Activated CD4-positive, alpha-beta T cell treated with anti-CD3 and anti-CD28 coated beads for 36 hours (primary cell): ENCODE measurements at regions of chr20 and their contacts with region 1.

Region 1: GRCh38 chr20:2663887-2664719 is at the start of gene IDH3B:
- DNase-seq: peak; percentile 96
- ATAC-seq: peak; percentile 99
- H3K4me3 Mint-ChIP-seq: peak within 1 kb of the TSS; percentile 86
- H3K27ac Mint-ChIP-seq: peak within 1 kb of the TSS; percentile 97
- H3K4me1 Mint-ChIP-seq: peaks cover 22% of the 10 kb centered on the region
- H3K27me3 Mint-ChIP-seq: no peaks in the 10 kb centered on the region
- total RNA-seq, gene IDH3B: 92.4 to 115 TPM

Region 2: GRCh38 chr20:2206957-2207769 is 456.9 kb before region 1 on chr20:
- CTCF ChIA-PET with region 1: no interaction called
- POLR2A ChIA-PET with region 1: no interaction called
- intact Hi-C with region 1: loop called in 1 of 2 experiments (anchors 5 kb)
- DNase-seq: peak; percentile 85
- ATAC-seq: peak; percentile 77
- H3K4me3 Mint-ChIP-seq: peak overlapping the region; percentile 67
- H3K27ac Mint-ChIP-seq: peak overlapping the region; percentile 24
- H3K4me1 Mint-ChIP-seq: peaks cover 9% of the 10 kb centered on the region
- H3K27me3 Mint-ChIP-seq: no peaks in the 10 kb centered on the region

Region 3: GRCh38 chr20:2314759-2315439 is 349.2 kb before region 1 on chr20:
- CTCF ChIA-PET with region 1: no interaction called
- POLR2A ChIA-PET with region 1: no interaction called
- intact Hi-C with region 1: no loop called
- DNase-seq: no peak
- ATAC-seq: no peak
- H3K4me3 Mint-ChIP-seq: no peak overlapping the region
- H3K27ac Mint-ChIP-seq: no peak overlapping the region
- H3K4me1 Mint-ChIP-seq: no peaks in the 10 kb centered on the region
- H3K27me3 Mint-ChIP-seq: peaks cover 3% of the 10 kb centered on the region

Region 4: GRCh38 chr20:2508631-2509467 is 155.3 kb before region 1 on chr20 and contains the start of gene ZNF343:
- CTCF ChIA-PET with region 1: no interaction called
- POLR2A ChIA-PET with region 1: no interaction called
- intact Hi-C with region 1: loop called in 1 of 2 experiments (anchors 1 kb)
- DNase-seq: peak; percentile 88
- ATAC-seq: peak; percentile 95
- H3K4me3 Mint-ChIP-seq: peak within 1 kb of the TSS; percentile 85
- H3K27ac Mint-ChIP-seq: peak within 1 kb of the TSS; percentile 95
- H3K4me1 Mint-ChIP-seq: peaks cover 8% of the 10 kb centered on the region
- H3K27me3 Mint-ChIP-seq: peaks cover 5% of the 10 kb centered on the region
- total RNA-seq, gene ZNF343: 9.9 to 12.3 TPM

Region 5: GRCh38 chr20:2651772-2652723 is 12.1 kb before region 1 on chr20 and contains the start of gene NOP56:
- CTCF ChIA-PET with region 1: interaction called, 6 read pairs
- POLR2A ChIA-PET with region 1: interaction called, 19 read pairs
- intact Hi-C with region 1: loop called (anchors 1 kb)
- DNase-seq: peak; percentile 95
- ATAC-seq: peak; percentile 84
- H3K4me3 Mint-ChIP-seq: peak within 1 kb of the TSS; percentile 87
- H3K27ac Mint-ChIP-seq: peak within 1 kb of the TSS; percentile 90
- H3K4me1 Mint-ChIP-seq: peaks cover 40% of the 10 kb centered on the region
- H3K27me3 Mint-ChIP-seq: no peaks in the 10 kb centered on the region
- total RNA-seq, gene NOP56: 504 to 532 TPM

Region 6: DNA sequence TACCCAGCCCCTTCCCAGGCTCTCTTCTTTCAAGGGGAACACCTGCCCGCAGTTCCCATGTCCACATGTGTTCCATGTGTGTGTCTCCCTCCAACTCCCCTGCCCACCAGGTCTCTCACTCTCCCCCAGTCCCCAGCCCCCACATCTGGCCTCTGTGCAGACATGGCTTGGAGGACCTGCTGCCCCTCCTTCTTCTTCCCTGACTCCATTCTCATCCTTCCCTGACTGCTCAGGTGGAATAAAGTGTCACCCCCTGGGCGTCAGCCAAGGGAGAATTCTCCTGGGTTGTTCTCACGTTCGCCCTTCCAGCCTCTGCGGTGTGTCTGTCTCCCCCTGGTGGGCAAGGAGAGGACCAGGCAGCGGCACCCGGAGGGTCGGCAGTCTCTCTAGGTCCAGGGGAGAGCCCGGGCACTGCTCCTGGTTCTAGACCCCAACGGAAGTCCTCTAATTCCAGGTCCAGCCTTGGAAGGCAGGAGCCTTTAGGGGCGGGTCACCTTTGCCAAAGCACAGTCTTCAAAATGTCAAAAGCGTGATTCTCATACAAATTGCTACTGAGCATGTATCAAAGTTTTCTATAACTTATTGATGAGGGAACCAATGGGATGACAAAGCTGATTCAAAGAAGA is 78.9 kb after region 1 on chr20:
- CTCF ChIA-PET with region 1: no interaction called
- POLR2A ChIA-PET with region 1: no interaction called
- intact Hi-C with region 1: loop called in 1 of 2 experiments (anchors 2 kb)
- DNase-seq: peak; percentile 83
- ATAC-seq: peak; percentile 73
- H3K4me3 Mint-ChIP-seq: no peak overlapping the region
- H3K27ac Mint-ChIP-seq: peak overlapping the region; percentile 63
- H3K4me1 Mint-ChIP-seq: peaks cover 45% of the 10 kb centered on the region
- H3K27me3 Mint-ChIP-seq: no peaks in the 10 kb centered on the region

Region 7: GRCh38 chr20:2840138-2840966 is 176.2 kb after region 1 on chr20 and contains the starts of genes PCED1A and VPS16:
- CTCF ChIA-PET with region 1: no interaction called
- POLR2A ChIA-PET with region 1: no interaction called
- intact Hi-C with region 1: loop called (anchors 1 to 2 kb)
- DNase-seq: peak; percentile 94
- ATAC-seq: peak; percentile 99
- H3K4me3 Mint-ChIP-seq: peak within 1 kb of the TSS; percentile 76
- H3K27ac Mint-ChIP-seq: peak within 1 kb of the TSS; percentile 84
- H3K4me1 Mint-ChIP-seq: peaks cover 32% of the 10 kb centered on the region
- H3K27me3 Mint-ChIP-seq: no peaks in the 10 kb centered on the region
- total RNA-seq, gene PCED1A: 29.4 to 35.3 TPM
- total RNA-seq, gene VPS16: 32.3 to 47.6 TPM

Region 8: DNA sequence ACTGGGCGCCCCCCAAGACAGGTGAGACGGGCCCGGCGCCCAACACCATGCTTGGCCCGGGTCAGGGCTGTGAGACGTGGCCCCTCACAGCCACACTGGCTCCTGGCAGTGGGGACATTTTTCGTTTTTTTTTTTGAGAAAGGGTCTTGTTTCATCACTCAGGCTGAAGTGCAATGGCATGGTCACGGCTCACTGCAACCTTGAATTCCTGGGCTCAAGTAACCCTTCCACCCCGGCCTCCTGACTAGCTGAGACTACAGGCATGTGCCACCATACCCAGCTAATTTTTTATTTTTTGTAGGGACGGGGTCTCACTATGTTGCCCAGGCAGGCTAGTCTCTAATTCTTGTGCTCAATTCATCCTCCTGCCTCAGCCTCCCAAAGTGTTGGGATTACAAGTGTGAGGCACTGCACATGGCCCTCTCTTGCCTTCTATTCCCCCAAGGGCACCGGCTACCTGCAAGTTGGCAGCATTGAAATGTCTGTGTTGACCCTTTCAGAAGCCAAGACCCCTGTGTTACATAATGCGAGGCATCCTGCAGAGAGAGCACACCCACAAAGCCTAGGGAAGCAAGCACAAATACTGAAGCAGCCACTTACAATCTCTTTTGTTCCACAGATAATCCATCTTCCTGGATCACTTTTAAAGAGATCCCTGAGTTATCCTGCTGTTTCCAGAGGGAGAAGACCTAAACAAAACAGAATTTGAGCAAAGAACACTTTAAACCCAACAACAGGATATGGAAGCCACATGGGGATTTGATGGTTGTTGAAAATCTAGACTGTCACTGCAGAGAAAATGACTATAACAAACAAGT is 632.4 kb after region 1 on chr20:
- CTCF ChIA-PET with region 1: no interaction called
- POLR2A ChIA-PET with region 1: interaction called, 12 read pairs
- intact Hi-C with region 1: no loop called
- DNase-seq: no peak
- ATAC-seq: no peak
- H3K4me3 Mint-ChIP-seq: no peak overlapping the region
- H3K27ac Mint-ChIP-seq: no peak overlapping the region
- H3K4me1 Mint-ChIP-seq: no peaks in the 10 kb centered on the region
- H3K27me3 Mint-ChIP-seq: no peaks in the 10 kb centered on the region